Posterior vena cava (tissue), 2 donors: ENCODE measurements at regions of chr12 and their contacts with region 1.

Region 1: GRCh38 chr12:87280356-87280755 is 748.8 kb downstream of the C12orf50 start:
- DNase-seq: no peak

Region 2: DNA sequence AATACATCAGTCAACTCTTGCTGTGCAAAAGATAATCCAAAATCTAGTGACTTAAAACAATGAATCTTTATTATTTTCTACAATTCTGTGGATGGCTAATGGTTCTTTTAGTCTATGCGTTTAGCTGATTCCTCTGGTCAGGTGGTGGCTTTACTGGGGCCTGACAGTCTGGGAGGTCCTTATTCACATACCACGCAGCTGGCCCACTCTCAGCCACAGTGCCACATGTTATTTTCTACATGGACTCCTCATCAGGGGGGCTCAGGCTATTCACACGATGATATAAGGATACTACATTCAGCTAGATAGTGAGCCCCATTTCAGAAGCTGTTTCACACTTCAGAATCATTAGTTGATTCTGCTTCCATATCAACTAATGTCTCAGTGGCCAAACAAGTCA is 736.6 kb before region 1 on chr12:
- intact Hi-C with region 1: loop called in 1 of 2 experiments (anchors 5 kb)
- DNase-seq: no peak